Gastrocnemius medialis (tissue), 4 donors: ENCODE measurements at regions of chr1 and their contacts with region 1.

Region 1: DNA sequence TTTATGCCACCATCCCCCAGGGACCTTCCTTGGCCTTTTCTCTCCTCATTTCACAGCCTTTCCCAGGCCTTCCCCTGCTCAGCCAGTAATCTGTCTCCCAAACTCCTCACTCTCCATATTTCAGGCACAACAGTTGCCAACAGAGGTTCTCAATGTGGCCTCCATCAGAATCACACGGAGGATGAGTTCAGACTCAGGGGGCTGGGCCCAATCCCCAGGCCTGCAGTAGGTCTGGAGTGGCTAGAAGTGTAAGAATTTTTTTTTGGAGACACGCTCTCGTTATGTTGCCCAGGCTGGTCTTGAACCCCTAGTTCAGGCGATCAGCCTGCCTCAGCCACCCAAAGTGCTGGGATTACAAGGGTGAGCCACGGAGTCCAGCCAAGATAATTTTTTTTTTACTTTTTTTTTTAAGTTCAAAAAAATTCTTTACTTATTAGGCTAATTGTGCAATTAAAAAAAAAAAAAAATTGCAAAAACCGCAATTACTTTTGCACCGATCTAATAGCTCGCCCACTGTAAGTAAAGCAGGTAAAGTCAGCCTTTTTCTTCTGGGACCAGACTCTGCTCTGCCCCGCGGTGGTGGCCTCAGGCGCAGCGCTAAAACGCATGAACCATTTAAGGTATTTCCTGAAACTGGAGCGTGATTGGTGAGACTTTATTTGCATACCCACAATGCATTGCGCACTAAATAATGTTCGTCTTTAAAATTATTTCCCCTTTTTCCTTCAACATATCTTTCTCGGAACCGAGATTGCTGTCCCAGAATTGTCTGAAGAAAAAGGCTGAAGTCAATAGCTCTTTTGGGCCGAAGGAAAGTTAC is 18.7 kb downstream of the KIAA2013 start:
- DNase-seq: peak; percentile 84 to 94
- ATAC-seq: peak; percentile 72 to 74
- H3K4me3 ChIP-seq: peak overlapping the region in 2 of 4 donors; percentile 86 to 93
- H3K27ac ChIP-seq: peak overlapping the region; percentile 95 to 99 (median 98)
- H3K4me1 ChIP-seq: no peaks in the 10 kb centered on the region
- H3K27me3 ChIP-seq: no peaks in the 10 kb centered on the region
- CTCF ChIP-seq: peak; percentile 78 to 93 (median 87)
- POLR2A ChIP-seq: no peak

Region 2: DNA sequence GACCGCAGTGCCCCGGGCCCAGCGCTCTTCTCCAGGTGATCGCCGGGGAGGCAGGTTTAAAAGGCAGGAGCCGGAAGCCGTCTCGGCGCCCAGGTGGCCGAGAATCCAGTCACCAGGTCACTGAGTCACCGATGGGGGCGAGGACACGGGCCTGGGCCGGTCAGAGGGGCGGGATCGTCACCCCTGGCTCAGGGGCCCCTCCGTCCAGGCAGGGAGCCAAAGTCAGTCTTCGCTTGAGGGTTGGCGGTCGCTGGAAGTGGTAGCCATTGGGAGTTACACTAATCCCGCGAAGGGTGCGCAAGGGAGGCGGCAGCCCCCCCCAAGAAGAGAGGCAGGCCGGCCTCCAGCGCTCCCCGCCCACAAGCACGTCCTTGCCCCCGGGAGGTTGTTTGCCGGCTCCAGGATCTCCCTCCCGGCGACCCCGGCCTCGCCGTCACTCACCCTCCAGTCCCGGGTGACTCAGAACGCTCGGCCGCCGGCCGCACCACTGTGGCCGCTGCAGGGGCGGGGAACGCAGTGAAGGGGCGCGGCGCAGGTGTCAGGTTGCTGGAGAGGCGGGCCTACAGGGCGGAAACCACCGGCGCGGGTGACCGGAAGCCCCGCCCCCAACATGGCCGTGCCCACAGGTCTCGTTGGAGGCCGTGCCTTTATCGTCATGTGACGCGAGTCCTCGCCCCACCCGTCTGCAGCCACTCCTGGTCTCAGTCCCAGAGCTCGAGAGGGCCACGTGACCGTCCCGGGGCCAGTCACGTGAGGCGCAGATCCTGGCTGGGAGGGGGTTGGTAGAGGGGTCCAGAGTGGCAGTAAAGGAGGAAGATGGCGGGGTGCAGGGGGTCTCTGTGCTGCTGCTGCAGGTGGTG is 101.8 kb before region 1 on chr1 and contains the starts of genes CLCN6 and MTHFR:
- in situ Hi-C with region 1: no loop called
- intact Hi-C with region 1: loop called (anchors 1 kb)
- DNase-seq: peak; percentile 100
- ATAC-seq: peak; percentile 72 to 73
- H3K4me3 ChIP-seq: peak within 1 kb of the TSS; percentile 82 to 95 (median 86)
- H3K27ac ChIP-seq: peak within 1 kb of the TSS; percentile 92 to 99 (median 96)
- H3K4me1 ChIP-seq: peaks cover 57 to 63% of the 10 kb centered on the region in 2 donors
- H3K27me3 ChIP-seq: no peaks in the 10 kb centered on the region
- CTCF ChIP-seq: peak in 1 of 5 experiments; percentile 55
- POLR2A ChIP-seq: peak; percentile 96 to 98
- total RNA-seq, gene CLCN6: 7.1 to 11.9 (median 9.5) TPM
- total RNA-seq, gene MTHFR: 10.2 to 24.7 (median 18.1) TPM

Region 3: DNA sequence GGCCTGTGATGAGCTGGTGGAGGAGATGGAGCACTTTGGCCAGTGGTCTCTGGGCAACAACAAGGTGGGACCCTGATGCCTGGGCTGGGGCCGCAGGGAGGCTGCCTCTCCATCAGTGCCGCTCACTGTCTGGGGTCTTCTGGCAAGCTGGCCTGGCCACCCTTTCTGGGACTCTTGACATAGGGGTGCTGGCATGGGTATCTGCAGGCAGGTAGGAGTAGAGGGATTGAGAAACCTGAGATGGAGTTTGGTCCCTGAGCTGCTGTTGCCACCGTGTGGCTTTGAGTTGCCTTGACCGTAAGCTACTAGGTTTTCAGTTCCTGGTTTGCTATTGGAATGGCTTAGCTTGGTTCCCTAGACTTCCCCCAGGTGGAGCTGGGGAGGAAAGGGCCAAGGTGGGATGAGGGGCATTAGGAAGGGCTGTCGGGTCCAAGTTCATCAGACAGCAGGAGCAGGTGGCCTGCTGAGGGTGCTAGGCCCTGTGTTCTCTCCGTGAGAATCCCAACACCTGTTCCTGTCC is 59.6 kb after region 1 on chr1:
- in situ Hi-C with region 1: no loop called
- intact Hi-C with region 1: loop called (anchors 2 kb)
- DNase-seq: peak in 1 of 2 donors; percentile 64
- ATAC-seq: peak; percentile 76 to 94
- H3K4me3 ChIP-seq: no peak overlapping the region
- H3K27ac ChIP-seq: peak overlapping the region in 2 of 4 donors; percentile 23 to 38
- H3K4me1 ChIP-seq: no peaks in the 10 kb centered on the region
- H3K27me3 ChIP-seq: no peaks in the 10 kb centered on the region
- CTCF ChIP-seq: peak; percentile 33 to 64 (median 56)
- POLR2A ChIP-seq: no peak

Region 4: GRCh38 chr1:12097321-12097720 is 189.8 kb after region 1 on chr1:
- in situ Hi-C with region 1: no loop called
- intact Hi-C with region 1: no loop called
- DNase-seq: no peak
- ATAC-seq: no peak
- H3K4me3 ChIP-seq: no peak overlapping the region
- H3K27ac ChIP-seq: no peak overlapping the region
- H3K4me1 ChIP-seq: no peaks in the 10 kb centered on the region
- H3K27me3 ChIP-seq: no peaks in the 10 kb centered on the region
- CTCF ChIP-seq: no peak
- POLR2A ChIP-seq: no peak